ENCODE measurements at regions of chr1 and their contacts with region 1.

Region 1: GRCh38 chr1:39754906-39755504 is 16.1 kb downstream of the OXCT2 start:
- DNase-seq: no peak
- ATAC-seq: no peak
- H3K4me3 Mint-ChIP-seq: no peak overlapping the region
- H3K27ac Mint-ChIP-seq: no peak overlapping the region
- H3K4me1 Mint-ChIP-seq: no peaks in the 10 kb centered on the region
- H3K27me3 Mint-ChIP-seq: no peaks in the 10 kb centered on the region
- CTCF ChIP-seq: no peak

Region 2: GRCh38 chr1:39738622-39739366 is 16.2 kb before region 1 on chr1 and contains the start of gene PPIE:
- CTCF ChIA-PET with region 1: no interaction called
- POLR2A ChIA-PET with region 1: interaction called, 15 read pairs
- intact Hi-C with region 1: no loop called
- DNase-seq: peak; percentile 99
- ATAC-seq: peak; percentile 99
- H3K4me3 Mint-ChIP-seq: peak within 1 kb of the TSS; percentile 93
- H3K27ac Mint-ChIP-seq: peak within 1 kb of the TSS; percentile 92
- H3K4me1 Mint-ChIP-seq: peaks cover 43% of the 10 kb centered on the region
- H3K27me3 Mint-ChIP-seq: peaks cover 8% of the 10 kb centered on the region
- CTCF ChIP-seq: no peak
- total RNA-seq, gene PPIE: 71.7 to 74.7 TPM

Region 3: GRCh38 chr1:39892601-39893595 is 137.9 kb after region 1 on chr1:
- CTCF ChIA-PET with region 1: no interaction called
- POLR2A ChIA-PET with region 1: no interaction called
- intact Hi-C with region 1: no loop called
- DNase-seq: no peak
- ATAC-seq: no peak
- H3K4me3 Mint-ChIP-seq: no peak overlapping the region
- H3K27ac Mint-ChIP-seq: no peak overlapping the region
- H3K4me1 Mint-ChIP-seq: no peaks in the 10 kb centered on the region
- H3K27me3 Mint-ChIP-seq: peaks cover 20% of the 10 kb centered on the region
- CTCF ChIP-seq: no peak

Region 4: GRCh38 chr1:39907528-39908453 is 152.8 kb after region 1 on chr1:
- CTCF ChIA-PET with region 1: no interaction called
- POLR2A ChIA-PET with region 1: no interaction called
- intact Hi-C with region 1: no loop called
- DNase-seq: no peak
- ATAC-seq: no peak
- H3K4me3 Mint-ChIP-seq: no peak overlapping the region
- H3K27ac Mint-ChIP-seq: no peak overlapping the region
- H3K4me1 Mint-ChIP-seq: peaks cover 2% of the 10 kb centered on the region
- H3K27me3 Mint-ChIP-seq: peaks cover 41% of the 10 kb centered on the region
- CTCF ChIP-seq: no peak

Measured in activated CD8-positive, alpha-beta T cell treated with anti-CD3 and anti-CD28 coated beads for 36 hours (primary cell).